ENCODE measurements at regions of chr6 and their contacts with region 1.

Region 1: DNA sequence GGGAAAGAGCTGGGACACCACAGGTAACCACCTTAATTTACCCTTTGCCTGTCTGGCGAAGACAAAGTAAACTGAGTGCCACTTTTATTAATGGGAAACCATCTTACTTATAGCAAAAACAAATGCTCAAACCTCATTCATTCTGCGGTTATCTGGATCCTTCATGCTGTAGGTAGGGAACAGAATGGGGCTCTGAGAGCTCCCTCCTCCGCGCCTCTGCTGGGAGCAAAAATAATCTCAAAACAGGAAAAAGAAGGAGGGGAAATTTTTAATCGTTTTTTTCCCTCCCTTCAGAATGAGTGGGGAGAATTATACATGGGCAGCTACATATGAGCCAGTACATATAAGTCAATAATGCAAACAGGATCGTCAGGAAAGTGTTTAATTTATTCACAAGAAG is 177.3 kb downstream of the GMPR start:
- DNase-seq: no peak
- ATAC-seq: no peak
- H3K4me3 ChIP-seq: no peak overlapping the region
- H3K27ac ChIP-seq: no peak overlapping the region
- H3K4me1 ChIP-seq: peaks cover 6% of the 10 kb centered on the region
- H3K27me3 ChIP-seq: no peaks in the 10 kb centered on the region
- CTCF ChIP-seq: no peak

Region 2: GRCh38 chr6:16391451-16391912 is 24.2 kb before region 1 on chr6:
- CTCF ChIA-PET with region 1: interaction called, 12 read pairs
- POLR2A ChIA-PET with region 1: no interaction called
- in situ Hi-C with region 1: no loop called
- intact Hi-C with region 1: no loop called
- DNase-seq: no peak
- ATAC-seq: no peak
- H3K4me3 ChIP-seq: no peak overlapping the region
- H3K27ac ChIP-seq: no peak overlapping the region
- H3K4me1 ChIP-seq: no peaks in the 10 kb centered on the region
- H3K27me3 ChIP-seq: no peaks in the 10 kb centered on the region
- CTCF ChIP-seq: no peak

Region 3: DNA sequence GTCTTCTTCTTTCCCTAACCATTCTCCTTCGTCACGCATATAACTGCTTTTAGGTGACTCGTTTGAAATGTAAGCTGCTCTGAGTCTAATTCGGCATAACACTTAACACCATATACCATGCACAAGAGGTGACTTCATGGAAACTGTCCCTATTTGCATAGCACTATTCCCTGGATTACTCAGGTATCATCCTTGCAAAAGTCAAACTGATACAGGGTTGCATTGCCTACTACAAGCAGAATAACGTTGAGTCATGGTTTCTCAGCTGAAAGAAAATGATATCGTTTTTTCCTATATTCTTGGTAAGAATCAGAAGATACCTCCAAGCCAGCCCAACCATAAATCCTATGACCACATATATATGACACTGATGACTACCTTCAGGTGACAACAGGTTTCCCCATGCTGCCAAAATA is 118.1 kb after region 1 on chr6:
- CTCF ChIA-PET with region 1: no interaction called
- POLR2A ChIA-PET with region 1: no interaction called
- in situ Hi-C with region 1: no loop called
- intact Hi-C with region 1: no loop called
- DNase-seq: no peak
- ATAC-seq: no peak
- H3K4me3 ChIP-seq: no peak overlapping the region
- H3K27ac ChIP-seq: no peak overlapping the region
- H3K4me1 ChIP-seq: peaks cover 3% of the 10 kb centered on the region; the same call in 1 of the 2 replicates
- H3K27me3 ChIP-seq: no peaks in the 10 kb centered on the region
- CTCF ChIP-seq: no peak